SK-N-SH (cell line): ENCODE measurements at regions of chr2 and their contacts with region 1.

Region 1: GRCh38 chr2:17309741-17310339 is 208.4 kb downstream of the RAD51AP2 start:
- DNase-seq: peak; percentile 72
- H3K4me3 ChIP-seq: no peak overlapping the region; a peak in 1 of 4 replicates
- H3K27ac ChIP-seq: no peak overlapping the region
- H3K4me1 ChIP-seq: peaks cover 0 to 6% of the 10 kb centered on the region in 2 experiments; a peak in 2 of 4 replicates
- H3K27me3 ChIP-seq: no peaks in the 10 kb centered on the region
- CTCF ChIP-seq: peak; percentile 93
- EP300 ChIP-seq: no peak; a peak in 1 of 4 replicates
- RAD21 ChIP-seq: peak; percentile 96

Region 2: GRCh38 chr2:16784652-16785051 is 525.2 kb before region 1 on chr2:
- CTCF ChIA-PET with region 1: interaction called, 45 read pairs
- POLR2A ChIA-PET with region 1: no interaction called
- DNase-seq: no peak
- H3K4me3 ChIP-seq: no peak overlapping the region
- H3K27ac ChIP-seq: no peak overlapping the region
- H3K4me1 ChIP-seq: no peaks in the 10 kb centered on the region; a peak in 1 of 4 replicates
- H3K27me3 ChIP-seq: no peaks in the 10 kb centered on the region
- CTCF ChIP-seq: no peak
- EP300 ChIP-seq: no peak
- RAD21 ChIP-seq: no peak

Region 3: DNA sequence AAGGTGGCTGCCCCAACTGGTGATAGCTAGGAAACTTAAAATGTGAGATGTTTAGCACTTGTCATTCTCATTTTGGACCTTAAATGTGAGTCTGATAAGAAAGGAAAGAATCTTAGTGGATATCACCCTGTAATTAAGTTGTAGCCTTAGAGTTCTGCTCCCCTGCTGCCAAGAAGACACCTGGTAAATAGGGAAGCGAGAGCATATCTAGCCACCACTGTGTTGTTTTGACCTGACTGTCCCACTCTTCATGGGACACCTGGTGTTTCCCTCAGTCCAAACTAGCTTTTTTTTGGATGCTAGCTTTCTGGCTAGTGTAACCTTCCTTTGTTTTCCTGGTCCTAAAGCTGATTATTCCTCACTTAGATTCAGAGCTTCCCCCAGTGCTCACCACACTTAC is 149.2 kb before region 1 on chr2:
- CTCF ChIA-PET with region 1: interaction called, 12 read pairs
- POLR2A ChIA-PET with region 1: no interaction called
- DNase-seq: no peak
- H3K4me3 ChIP-seq: no peak overlapping the region
- H3K27ac ChIP-seq: no peak overlapping the region
- H3K4me1 ChIP-seq: no peaks in the 10 kb centered on the region; a peak in 1 of 4 replicates
- H3K27me3 ChIP-seq: no peaks in the 10 kb centered on the region
- CTCF ChIP-seq: no peak
- EP300 ChIP-seq: no peak
- RAD21 ChIP-seq: no peak

Region 4: DNA sequence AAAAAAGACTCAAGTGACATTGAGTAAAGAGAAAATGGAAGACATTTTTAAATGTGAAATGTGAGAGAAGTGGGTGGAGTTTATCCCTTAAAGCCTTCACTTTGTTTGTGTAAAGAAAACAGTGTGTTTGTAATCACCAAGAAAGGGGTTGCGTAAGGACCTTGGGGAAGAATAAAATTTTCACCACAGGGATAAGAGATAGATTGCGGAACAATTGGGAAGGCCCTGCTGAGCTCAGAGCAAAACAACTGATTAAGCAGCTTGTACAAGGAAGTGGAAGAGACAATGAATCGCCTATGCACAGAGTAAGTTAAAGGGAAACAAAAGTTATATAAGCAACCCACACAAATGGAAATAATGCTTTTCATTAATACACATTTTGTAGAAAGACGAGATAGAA is 119.3 kb before region 1 on chr2:
- CTCF ChIA-PET with region 1: interaction called, 21 read pairs
- POLR2A ChIA-PET with region 1: no interaction called
- DNase-seq: no peak
- H3K4me3 ChIP-seq: no peak overlapping the region
- H3K27ac ChIP-seq: no peak overlapping the region
- H3K4me1 ChIP-seq: peaks cover 0 to 2% of the 10 kb centered on the region in 2 experiments; a peak in 2 of 4 replicates
- H3K27me3 ChIP-seq: no peaks in the 10 kb centered on the region
- CTCF ChIP-seq: no peak
- EP300 ChIP-seq: no peak
- RAD21 ChIP-seq: no peak

Region 5: GRCh38 chr2:17646081-17646554 is 336.3 kb after region 1 on chr2:
- CTCF ChIA-PET with region 1: interaction called, 13 read pairs
- POLR2A ChIA-PET with region 1: no interaction called
- DNase-seq: peak; percentile 64
- H3K4me3 ChIP-seq: no peak overlapping the region; a peak in 1 of 4 replicates
- H3K27ac ChIP-seq: peak overlapping the region in 1 of 2 experiments; percentile 25; a peak in 1 of 4 replicates
- H3K4me1 ChIP-seq: peaks cover 0 to 30% of the 10 kb centered on the region in 2 experiments; a peak in 2 of 4 replicates
- H3K27me3 ChIP-seq: no peaks in the 10 kb centered on the region
- CTCF ChIP-seq: peak; percentile 96
- EP300 ChIP-seq: no peak
- RAD21 ChIP-seq: peak; percentile 78